GM10248 (cell line): ENCODE measurements at regions of chr16 and their contacts with region 1.

Region 1: GRCh38 chr16:85528528-85529387 is 84.4 kb upstream of the GSE1 start:
- DNase-seq: peak; percentile 62
- CTCF ChIP-seq: peak; percentile 35

Region 2: DNA sequence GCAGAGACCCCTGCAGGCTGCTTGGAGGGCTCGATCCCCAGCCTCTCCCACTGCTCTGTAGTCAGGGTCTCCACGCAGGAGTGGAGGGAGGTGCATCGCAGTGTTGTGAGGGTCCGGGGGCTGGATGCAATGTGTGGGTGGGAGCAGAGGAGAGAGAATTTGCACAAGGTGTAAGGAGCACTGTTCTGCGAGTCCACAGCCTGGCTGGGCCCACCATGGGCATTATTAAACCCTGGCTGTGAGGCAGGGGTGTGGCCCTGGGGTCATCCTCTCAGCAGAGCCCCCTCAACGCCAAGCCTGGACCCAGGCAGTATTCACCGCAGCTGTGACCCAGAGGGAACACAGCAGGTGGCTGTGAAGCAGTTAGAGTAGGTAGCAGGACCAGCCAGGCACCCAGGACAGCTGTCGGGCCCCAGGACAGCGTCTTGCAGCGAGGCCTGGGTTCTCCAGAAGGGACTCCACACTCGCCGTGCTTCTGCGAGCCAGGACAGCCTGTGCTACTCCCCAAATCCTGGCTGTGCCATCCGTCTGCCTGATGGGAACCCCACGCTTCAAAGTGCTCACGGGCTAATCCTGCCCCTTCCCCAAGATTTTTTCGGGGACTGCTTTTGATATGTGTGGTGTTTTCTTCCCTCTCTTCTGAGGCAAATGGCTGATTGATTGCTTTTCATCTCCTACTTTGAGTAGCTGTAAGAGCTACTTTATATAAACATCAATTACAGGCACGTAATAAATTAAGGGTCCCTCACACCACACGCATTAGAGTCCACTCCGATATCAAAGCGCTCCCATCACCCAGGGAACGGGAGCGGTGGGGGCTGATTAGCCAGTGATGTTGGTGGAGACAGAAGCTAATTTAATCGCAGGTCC is 16.6 kb before region 1 on chr16:
- CTCF ChIA-PET with region 1: interaction called, 14 read pairs
- POLR2A ChIA-PET with region 1: no interaction called
- DNase-seq: no peak
- CTCF ChIP-seq: no peak